BJ (cell line): ENCODE measurements at regions of chr4 and their contacts with region 1.

Region 1: DNA sequence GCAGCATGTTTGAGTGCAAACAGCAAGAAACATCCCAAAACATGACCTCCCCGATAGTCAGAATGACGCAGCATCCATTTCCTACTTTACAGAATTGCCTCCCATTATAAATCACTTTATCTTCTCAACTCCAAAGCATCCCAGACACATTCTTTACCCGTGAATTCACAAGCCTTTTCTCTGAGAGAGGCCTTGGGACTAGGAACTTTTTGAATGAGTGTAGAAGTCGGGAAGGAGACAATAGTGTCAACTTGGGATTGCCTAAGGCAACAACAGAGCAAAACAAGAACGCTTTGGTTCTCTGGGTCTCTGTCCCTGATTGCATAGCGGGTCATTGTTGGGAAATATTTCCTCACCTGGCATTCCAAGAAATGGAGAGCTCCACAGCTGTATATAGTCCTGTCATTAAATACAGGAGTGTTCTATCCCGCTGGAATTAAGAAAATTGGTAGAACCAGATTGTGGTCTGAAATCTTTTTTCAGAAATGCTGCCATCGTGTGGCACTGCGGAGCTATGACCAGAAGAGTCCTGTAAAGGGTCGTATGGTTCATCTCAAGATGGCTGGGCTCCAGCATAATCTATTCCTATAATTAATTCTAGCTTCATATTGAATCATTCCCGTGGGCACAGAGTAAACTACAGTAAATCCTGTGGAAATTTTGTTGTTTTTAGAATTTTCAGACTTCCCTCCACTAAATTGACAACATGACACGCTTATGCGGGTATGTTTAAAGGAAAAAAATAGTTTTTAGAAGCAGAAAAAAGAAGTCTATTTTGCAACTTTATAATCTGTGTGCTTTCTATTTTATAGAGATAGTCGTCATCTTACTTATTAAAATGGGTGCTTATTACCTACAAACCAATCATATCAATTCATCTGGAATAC is 2.0 kb upstream of the SPP1 start:
- DNase-seq: peak; percentile 84
- H3K4me3 ChIP-seq: peak overlapping the region; percentile 17; the same call in 1 of the 2 replicates
- H3K27me3 ChIP-seq: no peaks in the 10 kb centered on the region
- CTCF ChIP-seq: peak; percentile 83

Region 2: GRCh38 chr4:86706923-86707597 is 1266.5 kb before region 1 on chr4:
- CTCF ChIA-PET with region 1: no interaction called
- POLR2A ChIA-PET with region 1: no interaction called
- DNase-seq: no peak
- H3K4me3 ChIP-seq: no peak overlapping the region
- H3K27me3 ChIP-seq: no peaks in the 10 kb centered on the region
- CTCF ChIP-seq: no peak

Region 3: GRCh38 chr4:87838890-87839591 is 134.5 kb before region 1 on chr4:
- CTCF ChIA-PET with region 1: no interaction called
- POLR2A ChIA-PET with region 1: no interaction called
- DNase-seq: no peak
- H3K4me3 ChIP-seq: no peak overlapping the region
- H3K27me3 ChIP-seq: no peaks in the 10 kb centered on the region
- CTCF ChIP-seq: peak; percentile 79

Region 4: DNA sequence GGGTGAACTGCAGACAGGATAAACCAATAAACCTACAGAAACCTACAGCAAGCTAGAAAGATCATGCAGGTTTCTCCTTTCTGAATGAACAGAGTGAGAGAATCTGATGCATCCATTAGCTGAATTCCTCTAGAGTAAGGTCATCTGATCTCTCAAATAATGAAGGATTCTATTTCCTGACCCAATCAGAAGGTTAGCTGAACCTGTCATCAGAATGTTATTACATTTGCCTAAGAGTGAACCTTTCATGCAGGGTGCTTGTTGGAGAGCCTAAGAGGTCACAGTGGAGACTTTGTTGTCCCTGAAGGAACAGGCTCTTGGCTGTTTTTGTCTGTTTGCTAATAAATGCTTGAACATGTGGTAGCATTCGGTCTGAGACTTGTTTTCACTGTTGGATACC is 116.7 kb before region 1 on chr4:
- CTCF ChIA-PET with region 1: interaction called, 23 read pairs
- POLR2A ChIA-PET with region 1: no interaction called
- DNase-seq: no peak
- H3K4me3 ChIP-seq: no peak overlapping the region
- H3K27me3 ChIP-seq: no peaks in the 10 kb centered on the region
- CTCF ChIP-seq: no peak

Region 5: GRCh38 chr4:87985097-87985886 is 11.8 kb after region 1 on chr4:
- CTCF ChIA-PET with region 1: interaction called, 17 read pairs
- POLR2A ChIA-PET with region 1: interaction called, 3 read pairs
- DNase-seq: no peak
- H3K4me3 ChIP-seq: no peak overlapping the region
- H3K27me3 ChIP-seq: no peaks in the 10 kb centered on the region
- CTCF ChIP-seq: peak; percentile 71